Prostate gland (tissue), 2 donors: ENCODE measurements at regions of chr17 and their contacts with region 1.

Region 1: DNA sequence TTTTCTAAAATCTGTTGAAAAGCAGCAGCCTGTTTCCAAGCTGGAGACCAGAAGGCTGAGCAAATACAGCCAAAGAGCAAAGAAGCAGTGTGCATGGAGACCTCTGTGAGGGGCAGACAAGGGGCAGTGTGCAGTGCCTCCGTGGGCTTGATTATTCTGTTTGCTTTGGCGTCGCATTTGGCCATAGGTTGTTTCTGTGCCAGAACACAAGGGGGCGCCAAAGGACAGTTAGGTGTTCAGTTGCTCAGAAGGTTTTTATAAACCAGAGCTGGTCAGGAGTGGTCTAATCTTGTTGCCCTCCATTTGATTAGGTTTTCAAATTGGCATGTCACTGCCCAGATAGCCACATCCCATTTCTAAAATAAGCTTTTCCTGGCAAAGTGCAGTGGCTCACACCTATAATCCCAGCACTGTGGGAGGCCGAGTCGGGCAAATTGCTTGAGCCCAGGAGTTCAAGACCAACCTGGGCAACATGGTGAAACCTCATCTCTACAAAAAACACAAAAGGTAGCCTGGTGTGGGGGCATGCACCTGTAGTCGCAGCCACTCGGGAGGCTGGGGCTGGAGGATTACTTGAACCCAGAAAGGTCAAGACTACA is 10.6 kb downstream of the MYH3 start:
- DNase-seq: peak; percentile 60
- H3K4me3 ChIP-seq: no peak overlapping the region
- H3K27ac ChIP-seq: no peak overlapping the region
- H3K4me1 ChIP-seq: no peaks in the 10 kb centered on the region
- H3K27me3 ChIP-seq: no peaks in the 10 kb centered on the region
- CTCF ChIP-seq: peak; percentile 61 to 80 (median 76)
- POLR2A ChIP-seq: no peak

Region 2: GRCh38 chr17:10683853-10684252 is 37.4 kb after region 1 on chr17:
- intact Hi-C with region 1: loop called (anchors 5 kb)
- DNase-seq: no peak
- H3K4me3 ChIP-seq: no peak overlapping the region
- H3K27ac ChIP-seq: no peak overlapping the region
- H3K4me1 ChIP-seq: no peaks in the 10 kb centered on the region
- H3K27me3 ChIP-seq: no peaks in the 10 kb centered on the region
- CTCF ChIP-seq: no peak
- POLR2A ChIP-seq: no peak